Activated CD8-positive, alpha-beta memory T cell treated with anti-CD3 and anti-CD28 coated beads, Interleukin-2, amount 10 ng/mL, durations not matched to agents 7 days and 5 days (primary cell): ENCODE measurements at regions of chr11 and their contacts with region 1.

Region 1: DNA sequence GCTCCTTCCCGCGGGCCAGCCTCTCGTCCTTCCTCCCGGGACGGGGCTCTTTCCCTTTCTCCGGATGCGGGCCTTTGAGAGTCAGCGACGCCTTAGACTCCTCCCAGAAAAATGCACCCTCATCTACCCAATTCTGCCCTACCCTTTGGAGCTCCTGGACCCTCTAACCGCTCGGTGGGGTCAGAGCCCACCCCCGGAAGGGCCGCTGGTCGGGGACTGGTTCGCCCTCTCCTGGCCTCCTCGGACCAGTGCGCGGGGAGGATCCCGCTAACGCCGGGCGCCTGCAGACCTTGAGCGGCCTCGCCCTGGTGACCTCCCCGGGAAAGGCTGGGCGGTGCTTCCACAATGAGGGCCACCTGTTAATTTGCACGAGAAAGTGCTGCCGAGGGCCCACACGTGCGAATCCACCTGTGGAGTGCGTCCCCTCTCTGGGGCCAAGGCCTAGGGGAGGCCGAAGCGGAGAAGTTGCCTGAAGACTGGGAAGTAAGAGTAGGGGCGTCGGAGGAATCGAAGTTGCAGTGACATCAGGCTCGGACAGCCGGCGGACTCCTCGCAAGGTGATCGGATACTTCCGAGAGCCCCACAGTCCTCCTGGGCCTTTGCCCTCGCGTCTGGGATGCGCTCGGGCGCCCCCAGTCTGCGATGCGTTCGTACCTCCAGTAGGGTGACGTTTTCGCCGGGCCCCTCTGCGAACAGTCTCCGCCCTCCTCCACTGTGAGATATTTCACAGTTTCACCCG is 61.5 kb downstream of the ENDOD1 start:
- DNase-seq: peak; percentile 96
- ATAC-seq: peak; percentile 96
- H3K4me3 Mint-ChIP-seq: peak overlapping the region; percentile 86
- H3K27ac Mint-ChIP-seq: peak overlapping the region; percentile 93
- H3K4me1 Mint-ChIP-seq: peaks cover 40% of the 10 kb centered on the region
- H3K27me3 Mint-ChIP-seq: peaks cover 2% of the 10 kb centered on the region

Region 2: GRCh38 chr11:95067039-95067840 is 83.9 kb before region 1 on chr11:
- CTCF ChIA-PET with region 1: interaction called, 258 read pairs
- DNase-seq: peak; percentile 82
- ATAC-seq: peak; percentile 69
- H3K4me3 Mint-ChIP-seq: peak overlapping the region; percentile 92
- H3K27ac Mint-ChIP-seq: peak overlapping the region; percentile 93
- H3K4me1 Mint-ChIP-seq: peaks cover 22% of the 10 kb centered on the region
- H3K27me3 Mint-ChIP-seq: peaks cover 10% of the 10 kb centered on the region

Region 3: GRCh38 chr11:95138448-95138847 is 12.7 kb before region 1 on chr11:
- CTCF ChIA-PET with region 1: interaction called, 21 read pairs
- DNase-seq: no peak
- ATAC-seq: peak; percentile 69
- H3K4me3 Mint-ChIP-seq: no peak overlapping the region
- H3K27ac Mint-ChIP-seq: no peak overlapping the region
- H3K4me1 Mint-ChIP-seq: peaks cover 26% of the 10 kb centered on the region
- H3K27me3 Mint-ChIP-seq: peaks cover 4% of the 10 kb centered on the region

Region 4: GRCh38 chr11:95254131-95254704 is 103.1 kb after region 1 on chr11:
- CTCF ChIA-PET with region 1: interaction called, 13 read pairs
- DNase-seq: peak; percentile 91
- ATAC-seq: peak; percentile 100
- H3K4me3 Mint-ChIP-seq: peak overlapping the region; percentile 74
- H3K27ac Mint-ChIP-seq: peak overlapping the region; percentile 79
- H3K4me1 Mint-ChIP-seq: peaks cover 25% of the 10 kb centered on the region
- H3K27me3 Mint-ChIP-seq: no peaks in the 10 kb centered on the region

Region 5: GRCh38 chr11:95705485-95706124 is 554.5 kb after region 1 on chr11:
- CTCF ChIA-PET with region 1: interaction called, 193 read pairs
- DNase-seq: peak; percentile 88
- ATAC-seq: peak; percentile 94
- H3K4me3 Mint-ChIP-seq: no peak overlapping the region
- H3K27ac Mint-ChIP-seq: no peak overlapping the region
- H3K4me1 Mint-ChIP-seq: peaks cover 7% of the 10 kb centered on the region
- H3K27me3 Mint-ChIP-seq: peaks cover 8% of the 10 kb centered on the region

Region 6: DNA sequence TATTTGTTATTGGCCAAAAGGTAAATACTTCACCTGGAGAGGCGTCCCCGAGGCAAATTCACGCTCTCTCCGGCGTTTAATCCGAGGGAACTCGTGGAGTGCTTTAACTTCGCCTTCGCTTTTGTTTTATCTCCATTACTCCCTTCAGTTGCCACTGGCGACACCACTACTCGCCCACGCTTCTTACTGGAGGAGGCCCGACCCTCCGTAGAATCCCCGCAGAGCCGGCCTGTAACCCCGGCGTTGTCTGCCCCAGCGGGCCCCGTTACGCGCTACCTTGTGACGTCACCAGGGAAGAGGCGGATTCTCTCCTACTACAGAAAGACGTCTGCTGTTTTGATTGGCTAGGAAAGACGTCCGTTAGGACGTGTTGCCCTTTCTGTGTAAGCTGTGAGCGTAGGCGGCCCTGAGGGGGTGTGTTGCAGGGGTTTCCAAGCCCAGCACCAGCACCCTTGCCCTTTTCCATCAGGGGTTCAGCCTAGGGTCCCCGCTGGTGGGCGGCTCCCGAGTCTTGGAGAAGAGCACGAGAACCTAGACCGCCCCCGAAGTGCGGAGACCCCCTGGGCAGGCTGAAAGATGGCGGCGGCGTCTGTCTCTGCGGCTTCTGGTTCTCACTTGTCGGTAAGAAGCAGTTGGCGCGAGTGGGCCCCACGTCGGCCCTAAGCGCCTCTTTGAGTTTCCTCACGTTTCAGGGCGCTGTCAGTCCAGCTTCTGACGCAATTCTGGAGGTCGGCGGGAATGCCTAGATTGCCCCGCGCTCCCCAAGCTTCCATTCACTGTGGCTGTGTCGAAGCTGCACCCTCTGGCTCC is 639.2 kb after region 1 on chr11 and contains the start of gene CEP57:
- CTCF ChIA-PET with region 1: interaction called, 18 read pairs
- DNase-seq: peak; percentile 97
- ATAC-seq: peak; percentile 71
- H3K4me3 Mint-ChIP-seq: peak within 1 kb of the TSS; percentile 99
- H3K27ac Mint-ChIP-seq: peak within 1 kb of the TSS; percentile 100
- H3K4me1 Mint-ChIP-seq: peaks cover 57% of the 10 kb centered on the region
- H3K27me3 Mint-ChIP-seq: no peaks in the 10 kb centered on the region
- total RNA-seq, gene CEP57: 80.6 to 92.4 TPM